Calu3 (cell line): ENCODE measurements at regions of chr10 and their contacts with region 1.

Region 1: DNA sequence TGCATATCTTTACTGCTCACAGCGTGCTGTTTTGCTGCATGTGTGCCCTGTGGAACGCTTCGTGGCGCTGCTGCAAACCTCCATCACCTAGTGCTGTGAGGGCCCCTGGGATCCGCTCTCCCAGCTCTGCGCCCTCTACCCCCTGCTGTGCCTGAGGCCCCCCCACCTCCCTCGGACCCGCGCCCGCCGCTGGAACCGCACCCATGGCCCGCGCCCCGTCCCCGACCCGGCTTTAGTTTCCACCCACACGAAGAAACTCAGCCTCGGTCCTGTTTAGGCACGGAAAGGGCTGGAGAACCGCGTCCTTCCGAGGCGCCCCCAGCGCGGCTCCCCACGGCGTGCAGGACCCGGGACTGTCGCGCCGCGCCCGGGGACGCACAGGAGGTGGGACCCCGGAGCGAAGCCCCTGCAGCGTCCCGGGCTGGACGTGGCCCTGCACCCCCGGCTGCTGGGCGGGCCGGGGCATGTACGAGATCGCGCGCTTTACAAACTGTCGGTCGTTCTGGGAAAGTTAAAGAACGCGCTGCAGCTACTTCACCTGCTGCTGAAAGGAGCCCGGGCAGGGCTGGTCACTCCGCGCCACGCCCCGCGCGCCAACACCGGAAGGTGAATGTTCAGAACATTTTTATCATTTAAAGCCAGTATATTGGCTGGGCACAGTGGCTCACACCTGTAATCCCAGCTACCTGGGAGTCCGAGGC is 54.3 kb downstream of the BMS1 start:
- DNase-seq: peak; percentile 11
- H3K4me3 Mint-ChIP-seq: peak overlapping the region; percentile 53
- H3K27ac Mint-ChIP-seq: no peak overlapping the region
- H3K4me1 Mint-ChIP-seq: no peaks in the 10 kb centered on the region
- H3K27me3 Mint-ChIP-seq: no peaks in the 10 kb centered on the region
- CTCF ChIP-seq: no peak

Region 2: DNA sequence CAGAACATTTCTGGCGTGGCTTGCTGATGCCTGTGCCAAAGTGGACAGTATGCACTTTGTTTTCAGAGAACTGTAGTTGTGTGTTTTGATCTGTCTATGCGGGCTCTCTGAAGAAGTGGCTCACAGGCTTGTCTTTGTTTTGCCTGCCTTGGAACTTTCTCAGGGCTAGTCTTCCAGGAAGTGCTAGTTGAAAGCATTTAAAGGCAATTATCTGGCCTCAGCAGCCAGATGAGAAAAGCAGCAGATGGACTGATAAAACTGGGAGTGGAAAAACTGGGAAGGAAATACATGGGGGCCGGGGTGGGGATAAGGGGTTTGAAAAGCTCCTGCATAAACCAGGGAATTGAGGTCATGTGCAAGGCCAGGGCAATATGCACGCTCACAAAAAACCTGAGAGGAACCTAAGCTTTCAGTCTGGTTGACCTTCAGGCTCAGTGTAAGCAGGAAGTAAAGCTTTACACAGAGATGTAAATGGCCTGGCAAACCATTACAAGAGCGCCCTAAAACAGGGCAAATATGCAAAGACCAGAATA is 293.0 kb before region 1 on chr10:
- CTCF ChIA-PET with region 1: no interaction called
- intact Hi-C with region 1: no loop called
- DNase-seq: no peak
- H3K4me3 Mint-ChIP-seq: no peak overlapping the region
- H3K27ac Mint-ChIP-seq: no peak overlapping the region
- H3K4me1 Mint-ChIP-seq: no peaks in the 10 kb centered on the region
- H3K27me3 Mint-ChIP-seq: no peaks in the 10 kb centered on the region
- CTCF ChIP-seq: no peak

Region 3: GRCh38 chr10:42782446-42783180 is 54.3 kb before region 1 on chr10 and contains the start of gene BMS1:
- CTCF ChIA-PET with region 1: interaction called, 11 read pairs
- intact Hi-C with region 1: no loop called
- DNase-seq: peak; percentile 92
- H3K4me3 Mint-ChIP-seq: peak within 1 kb of the TSS; percentile 92
- H3K27ac Mint-ChIP-seq: peak within 1 kb of the TSS; percentile 85
- H3K4me1 Mint-ChIP-seq: no peaks in the 10 kb centered on the region
- H3K27me3 Mint-ChIP-seq: peaks cover 9% of the 10 kb centered on the region
- CTCF ChIP-seq: no peak
- total RNA-seq, gene BMS1: 25.9 and 26.2 TPM in 2 replicates